ENCODE measurements at regions of chr12 and their contacts with region 1.

Region 1: DNA sequence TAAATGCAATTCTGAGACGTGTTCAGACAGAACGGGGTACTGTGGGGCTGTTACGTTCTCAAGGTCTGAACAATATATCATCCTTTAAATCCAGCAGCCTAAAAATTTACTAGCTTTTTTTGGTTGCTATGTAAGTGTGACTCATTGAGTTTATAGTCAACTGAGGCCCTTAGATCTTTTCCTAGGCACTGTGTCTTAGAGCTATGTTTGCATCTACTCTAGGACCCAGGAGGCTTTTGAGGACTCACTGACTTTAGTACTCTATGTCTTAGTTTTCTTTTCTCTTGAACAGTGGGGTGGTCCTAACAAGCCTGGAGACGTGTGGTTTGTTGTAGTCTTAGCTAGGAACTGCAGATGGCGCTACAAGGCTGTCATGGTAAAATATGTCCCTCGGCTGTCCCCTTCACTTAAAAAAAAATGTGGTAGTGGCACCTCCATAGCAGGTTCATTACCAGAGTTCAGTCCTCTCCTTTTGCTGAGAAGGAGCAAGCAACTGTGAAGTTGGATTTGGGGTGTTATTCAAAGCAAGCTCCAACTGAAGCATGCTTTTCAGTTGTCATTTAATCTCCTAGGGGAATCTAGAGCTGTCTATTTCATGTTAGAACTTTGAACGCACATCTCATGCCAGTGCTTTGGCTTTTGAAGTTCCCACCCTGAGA is 8.7 kb upstream of the SPATS2 start:
- DNase-seq: peak; percentile 84 to 94 (median 89)
- H3K4me3 ChIP-seq: no peak overlapping the region
- H3K27ac ChIP-seq: no peak overlapping the region
- H3K4me1 ChIP-seq: no peaks in the 10 kb centered on the region
- H3K27me3 ChIP-seq: no peaks in the 10 kb centered on the region

Region 2: GRCh38 chr12:49256274-49256637 is 102.4 kb before region 1 on chr12:
- CTCF ChIA-PET with region 1: no interaction called
- POLR2A ChIA-PET with region 1: no interaction called
- DNase-seq: no peak
- H3K4me3 ChIP-seq: no peak overlapping the region
- H3K27ac ChIP-seq: peak overlapping the region in 1 of 2 experiments; percentile 12
- H3K4me1 ChIP-seq: peaks cover 0 to 22% (median 0%) of the 10 kb centered on the region in 4 experiments
- H3K27me3 ChIP-seq: no peaks in the 10 kb centered on the region

Region 3: DNA sequence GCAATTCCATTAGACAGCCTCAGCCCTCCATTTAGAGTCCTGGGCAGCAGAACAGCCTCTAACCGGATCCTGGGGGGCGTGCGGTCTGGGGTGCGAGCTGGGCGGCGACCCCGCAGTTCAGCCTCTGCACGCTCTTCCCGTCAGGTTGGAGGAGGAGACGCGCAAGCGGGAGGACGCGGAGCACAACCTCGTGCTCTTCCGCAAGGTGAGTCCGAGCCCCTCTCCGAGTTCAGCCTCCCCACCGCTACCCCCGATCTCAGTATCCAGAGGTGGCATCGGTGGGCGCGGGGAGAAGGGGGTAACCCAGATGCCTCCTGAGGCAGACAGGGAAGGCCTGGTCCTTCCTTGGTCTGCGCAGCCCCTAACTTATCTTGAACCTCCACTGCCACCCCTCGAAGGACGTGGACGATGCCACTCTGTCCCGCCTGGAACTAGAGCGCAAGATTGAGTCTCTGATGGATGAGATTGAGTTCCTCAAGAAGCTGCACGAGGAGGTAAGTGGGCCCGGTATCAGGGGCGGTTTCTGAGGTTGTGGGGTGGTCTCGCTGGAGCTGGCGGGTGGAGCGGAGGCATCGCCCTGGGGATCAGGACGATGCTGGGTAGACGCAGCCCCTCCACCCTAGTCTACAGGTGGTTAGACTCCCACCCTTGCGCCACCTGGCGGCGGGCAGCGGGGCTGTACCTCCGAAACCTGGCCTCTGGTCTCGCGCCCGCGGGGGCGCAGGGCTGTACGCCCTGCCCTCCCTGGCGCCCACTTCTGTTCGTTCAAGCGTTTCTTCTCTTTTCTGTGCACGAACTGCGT is 62.4 kb before region 1 on chr12:
- CTCF ChIA-PET with region 1: interaction called, 22 read pairs
- POLR2A ChIA-PET with region 1: no interaction called
- DNase-seq: peak; percentile 63 to 74 (median 73)
- H3K4me3 ChIP-seq: peak overlapping the region in 4 of 7 experiments; percentile 19 to 48 (median 39)
- H3K27ac ChIP-seq: no peak overlapping the region
- H3K4me1 ChIP-seq: peaks cover 0 to 30% (median 18%) of the 10 kb centered on the region in 4 experiments
- H3K27me3 ChIP-seq: peaks cover 0 to 71% (median 54%) of the 10 kb centered on the region in 5 experiments

Region 4: DNA sequence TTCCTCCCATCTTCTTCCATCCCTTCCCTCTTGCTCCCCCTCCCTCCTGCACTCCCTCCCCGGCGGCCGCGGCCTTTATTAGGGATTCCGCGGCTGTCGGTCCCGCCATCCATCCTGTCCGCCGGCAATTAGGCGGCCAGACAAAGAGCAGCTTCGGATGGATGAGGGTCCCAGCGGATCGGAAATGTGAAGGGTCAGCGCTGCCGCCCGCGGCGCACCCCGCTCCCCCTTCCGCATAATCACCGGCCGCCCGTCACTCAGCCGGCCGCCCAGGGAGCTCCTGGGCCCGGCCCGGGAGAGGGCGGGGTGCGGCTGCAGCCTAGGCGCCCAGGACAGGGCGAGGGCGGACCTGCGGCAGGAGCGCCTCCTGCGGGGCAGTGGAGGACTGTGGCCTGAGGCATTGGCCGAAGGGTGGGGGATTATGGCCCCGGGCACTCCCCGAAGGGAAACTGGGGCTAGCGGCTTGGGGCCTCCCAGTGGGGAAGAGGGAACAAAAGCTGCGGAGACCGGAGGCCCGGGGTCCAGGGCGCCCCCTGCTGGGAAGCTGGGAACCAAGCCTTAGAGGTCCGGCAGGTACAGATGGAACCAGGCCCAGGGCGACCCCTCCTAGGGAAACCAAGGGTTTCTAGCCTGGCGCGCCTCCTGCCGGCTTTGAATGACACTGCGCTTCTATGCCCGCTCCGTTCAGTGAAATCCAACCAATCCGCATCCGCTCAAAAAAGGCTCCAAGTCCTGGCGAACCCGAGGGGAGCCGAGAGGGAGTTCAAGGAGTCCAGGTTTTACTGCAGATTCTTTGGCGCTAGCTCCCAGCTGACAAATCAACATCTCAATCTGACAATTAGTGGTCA is 16.3 kb before region 1 on chr12:
- CTCF ChIA-PET with region 1: interaction called, 37 read pairs
- POLR2A ChIA-PET with region 1: no interaction called
- DNase-seq: peak; percentile 84 to 90 (median 88)
- H3K4me3 ChIP-seq: peak overlapping the region; percentile 8 to 73 (median 26)
- H3K27ac ChIP-seq: no peak overlapping the region
- H3K4me1 ChIP-seq: peaks cover 0 to 55% (median 40%) of the 10 kb centered on the region in 4 experiments
- H3K27me3 ChIP-seq: peaks cover 11 to 100% (median 49%) of the 10 kb centered on the region in 5 experiments

Region 5: GRCh38 chr12:49503674-49504180 is 145.1 kb after region 1 on chr12:
- CTCF ChIA-PET with region 1: interaction called, 26 read pairs
- POLR2A ChIA-PET with region 1: no interaction called
- DNase-seq: no peak
- H3K4me3 ChIP-seq: no peak overlapping the region
- H3K27ac ChIP-seq: no peak overlapping the region
- H3K4me1 ChIP-seq: peaks cover 0 to 2% (median 0%) of the 10 kb centered on the region in 4 experiments
- H3K27me3 ChIP-seq: no peaks in the 10 kb centered on the region

Region 6: DNA sequence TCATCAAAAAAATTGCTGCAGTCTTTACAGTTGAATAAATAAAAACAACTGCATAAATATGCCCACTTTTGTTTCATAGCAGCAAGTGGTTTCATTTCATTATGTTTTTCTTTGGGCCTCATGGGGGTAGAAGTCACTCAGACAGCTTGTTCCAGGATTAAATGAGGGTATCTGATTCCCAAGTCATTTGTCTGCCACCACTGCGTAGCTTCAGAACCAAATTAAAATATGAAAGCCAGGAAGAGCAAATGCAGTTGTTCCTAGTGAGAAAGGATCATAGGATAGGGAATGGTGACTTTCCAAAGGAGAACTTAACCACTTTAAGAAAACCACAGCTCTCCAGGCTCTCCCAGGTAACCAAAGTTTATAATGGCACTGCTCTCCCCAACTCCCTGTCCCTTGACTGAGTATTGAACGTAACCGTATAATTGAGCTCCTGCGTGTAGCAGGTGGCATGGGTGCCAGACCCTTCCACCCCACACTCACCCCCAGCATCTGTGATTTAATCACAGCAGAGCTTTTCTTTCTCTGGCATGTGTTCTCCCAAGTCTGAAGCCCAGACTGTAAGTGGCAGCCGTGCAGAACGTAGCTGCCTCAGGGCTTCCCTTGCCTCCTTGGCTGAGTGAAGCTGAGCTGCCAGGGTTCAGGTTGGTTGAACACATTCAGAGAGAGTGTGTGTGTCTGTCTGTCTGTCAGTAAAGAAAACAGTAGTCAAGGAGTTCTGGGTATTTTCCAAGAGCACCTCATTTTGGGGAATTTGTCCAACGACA is 168.9 kb after region 1 on chr12:
- CTCF ChIA-PET with region 1: interaction called, 33 read pairs
- POLR2A ChIA-PET with region 1: no interaction called
- DNase-seq: no peak
- H3K4me3 ChIP-seq: no peak overlapping the region
- H3K27ac ChIP-seq: no peak overlapping the region
- H3K4me1 ChIP-seq: peaks cover 0 to 6% (median 3%) of the 10 kb centered on the region in 4 experiments
- H3K27me3 ChIP-seq: no peaks in the 10 kb centered on the region